Aorta (tissue), 5 donors: ENCODE measurements at regions of chr17 and their contacts with region 1.

Region 1: GRCh38 chr17:45371414-45372327 is 54.9 kb upstream of the MAP3K14 start:
- DNase-seq: peak; percentile 91 to 96
- ATAC-seq: peak; percentile 94
- H3K4me3 ChIP-seq: no peak overlapping the region
- H3K27ac ChIP-seq: peak overlapping the region in 1 of 2 donors; percentile 85
- H3K4me1 ChIP-seq: no peaks in the 10 kb centered on the region
- H3K27me3 ChIP-seq: no peaks in the 10 kb centered on the region

Region 2: DNA sequence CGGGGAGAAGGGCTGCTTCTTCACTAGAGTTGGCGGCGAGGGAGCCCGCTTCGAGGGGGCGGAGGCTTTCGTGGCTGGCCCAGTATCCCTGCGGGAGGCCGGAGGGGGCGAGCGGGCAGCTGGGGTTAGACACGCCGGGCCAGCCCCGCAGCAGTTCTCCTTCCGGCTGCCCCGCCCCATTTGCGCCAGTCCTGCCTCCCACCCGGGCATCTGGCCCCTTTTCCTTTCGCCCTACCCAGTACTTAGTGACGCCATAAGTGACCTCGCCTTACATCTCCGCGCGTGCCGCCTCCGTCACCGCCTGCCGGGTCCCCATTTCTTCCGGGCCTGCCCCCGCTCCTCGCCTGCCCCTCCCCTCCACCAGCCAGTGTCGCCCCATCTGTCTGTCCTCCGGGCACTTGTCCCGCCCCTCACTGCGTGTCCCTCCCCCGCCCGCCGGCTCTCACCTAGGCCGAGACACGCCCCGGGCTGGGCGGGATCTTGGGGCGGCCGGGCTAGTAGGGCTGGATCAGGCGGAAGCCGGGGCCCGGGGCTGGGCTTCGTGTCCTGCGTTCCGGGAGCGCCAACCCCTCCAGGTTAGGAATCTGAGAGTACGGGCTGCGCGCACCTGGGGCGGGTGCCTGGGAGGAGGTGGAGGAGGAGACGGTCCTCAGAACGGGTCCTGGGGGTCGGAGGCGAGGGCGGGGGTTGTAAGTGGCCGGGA is 124.1 kb before region 1 on chr17:
- intact Hi-C with region 1: no loop called
- DNase-seq: peak; percentile 89 to 91
- ATAC-seq: peak; percentile 74
- H3K4me3 ChIP-seq: peak overlapping the region; percentile 11 to 23
- H3K27ac ChIP-seq: no peak overlapping the region
- H3K4me1 ChIP-seq: no peaks in the 10 kb centered on the region
- H3K27me3 ChIP-seq: no peaks in the 10 kb centered on the region

Region 3: DNA sequence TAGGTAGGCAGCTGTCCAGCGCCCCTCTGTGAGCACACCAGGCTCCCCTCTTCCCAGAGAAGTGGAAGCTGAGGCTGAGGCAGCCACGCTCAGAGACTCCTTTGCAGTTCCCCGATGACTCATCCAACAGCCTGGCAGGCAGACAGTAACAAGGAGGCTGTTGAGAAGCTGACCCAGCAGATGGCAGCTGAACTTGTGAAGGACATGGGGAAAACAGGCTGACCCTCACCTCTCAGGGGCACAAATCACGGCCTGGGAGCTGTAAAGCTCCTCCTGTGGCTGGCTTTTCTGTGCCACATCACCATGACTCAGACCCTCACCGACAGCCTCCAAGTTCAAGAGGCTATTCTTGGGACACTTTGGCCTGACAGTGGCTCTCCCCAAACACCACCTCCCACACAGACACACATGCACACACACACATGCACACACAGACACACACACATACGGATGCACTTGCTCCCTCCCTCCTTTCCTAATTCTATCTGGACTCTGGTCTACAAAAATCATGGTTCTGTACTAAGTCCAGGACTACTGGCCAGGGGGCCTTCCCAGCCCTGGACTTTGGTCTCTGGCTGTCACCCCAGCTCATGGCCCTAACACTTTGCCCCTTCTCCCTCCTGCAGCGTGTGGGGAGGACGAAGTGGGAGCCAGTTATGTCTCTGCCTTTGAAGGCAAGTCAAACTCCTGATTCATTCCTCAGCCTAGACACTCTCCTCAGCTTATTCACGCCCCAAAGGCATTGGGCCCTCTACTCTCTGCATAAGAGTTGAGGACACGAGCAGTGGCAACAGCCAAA is 78.1 kb before region 1 on chr17:
- intact Hi-C with region 1: loop called in 1 of 2 experiments (anchors 5 kb)
- DNase-seq: peak; percentile 92 to 93
- ATAC-seq: peak; percentile 87
- H3K4me3 ChIP-seq: no peak overlapping the region
- H3K27ac ChIP-seq: peak overlapping the region; percentile 10 to 96
- H3K4me1 ChIP-seq: peaks cover 8 to 16% of the 10 kb centered on the region in 2 donors
- H3K27me3 ChIP-seq: no peaks in the 10 kb centered on the region

Region 4: DNA sequence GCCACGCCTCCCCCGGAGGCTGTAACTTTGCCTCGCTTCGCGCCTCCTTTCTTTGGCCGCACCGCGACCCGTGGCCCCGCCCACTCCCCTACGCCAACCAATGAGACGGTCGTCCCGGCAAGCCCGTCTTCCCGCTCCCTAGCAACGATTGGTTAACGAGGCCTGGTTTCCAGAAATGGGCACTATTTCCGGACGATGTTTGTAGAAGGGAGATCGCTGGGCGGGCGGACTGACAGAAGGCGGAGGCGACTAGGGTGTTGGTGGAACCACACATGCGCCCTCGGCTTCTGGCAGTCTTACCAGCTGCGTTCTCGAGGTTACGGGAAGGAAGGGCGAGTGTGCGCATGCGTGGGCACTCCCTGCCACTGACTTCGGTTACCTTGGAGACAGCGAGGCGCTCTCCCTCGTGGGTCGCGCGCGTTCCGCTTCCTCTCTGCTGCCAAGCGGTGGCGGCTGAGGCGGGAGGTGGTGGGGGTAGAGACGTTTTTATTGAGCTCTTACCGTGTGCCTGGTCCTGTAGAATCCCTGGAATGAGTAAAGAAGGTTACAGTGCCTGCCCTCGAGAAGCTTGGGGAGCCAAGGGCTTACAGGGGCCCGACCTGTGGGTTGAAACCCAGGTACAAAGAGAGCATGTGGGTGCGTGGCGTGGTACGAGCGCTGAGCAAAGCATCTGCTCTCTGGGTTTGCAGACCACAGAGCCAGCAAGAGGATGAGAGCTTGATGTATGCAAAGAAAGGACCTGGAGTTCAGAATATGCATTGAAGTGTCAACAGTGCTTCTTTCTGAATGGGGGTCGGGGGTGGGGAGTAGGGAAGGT is 54.4 kb before region 1 on chr17:
- intact Hi-C with region 1: loop called (anchors 2 to 5 kb)
- DNase-seq: peak; percentile 100
- ATAC-seq: peak; percentile 96
- H3K4me3 ChIP-seq: no peak overlapping the region
- H3K27ac ChIP-seq: peak overlapping the region in 1 of 2 donors; percentile 34
- H3K4me1 ChIP-seq: no peaks in the 10 kb centered on the region
- H3K27me3 ChIP-seq: no peaks in the 10 kb centered on the region

Region 5: DNA sequence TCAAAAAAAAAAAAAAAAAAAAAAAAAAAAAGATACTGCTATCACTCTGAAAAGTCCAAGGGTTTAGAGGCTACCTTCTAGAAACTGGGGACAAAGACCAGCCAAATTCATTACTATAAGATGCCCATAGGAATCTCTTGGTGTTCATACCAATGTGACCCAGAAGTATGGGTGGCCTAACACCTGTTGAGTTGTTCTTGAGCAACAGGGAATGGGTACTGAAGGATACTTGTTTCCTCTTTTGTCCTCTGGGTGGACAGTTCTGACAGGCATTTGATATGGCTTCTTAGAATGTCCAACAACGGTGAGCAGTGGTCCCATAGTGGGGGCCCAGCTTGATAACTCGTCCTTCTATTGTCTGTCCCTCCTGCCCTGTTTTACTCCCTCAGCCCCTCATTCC is 260.3 kb after region 1 on chr17:
- intact Hi-C with region 1: no loop called
- DNase-seq: no peak
- ATAC-seq: no peak
- H3K4me3 ChIP-seq: no peak overlapping the region
- H3K27ac ChIP-seq: no peak overlapping the region
- H3K4me1 ChIP-seq: no peaks in the 10 kb centered on the region
- H3K27me3 ChIP-seq: no peaks in the 10 kb centered on the region